K562 (cell line): ENCODE measurements at regions of chr1 and their contacts with region 1.

Region 1: GRCh38 chr1:65309304-65310077 is at the start of gene DNAJC6:
- DNase-seq: peak; percentile 76 to 88 (median 80)
- ATAC-seq: peak; percentile 93
- H3K4me3 ChIP-seq: peak within 1 kb of the TSS; percentile 51
- H3K27ac ChIP-seq: peak within 1 kb of the TSS; percentile 68
- H3K4me1 ChIP-seq: peaks cover 16 to 25% of the 10 kb centered on the region in 2 experiments; a peak in 4 of 5 replicates
- H3K27me3 ChIP-seq: no peaks in the 10 kb centered on the region
- CTCF ChIP-seq: peak in 2 of 3 experiments; percentile 37 to 58; a peak in 4 of 6 replicates
- EP300 ChIP-seq: no peak; the same call in 1 of the 2 replicates
- POLR2A ChIP-seq: 0 out of 2 replicates have a peak, but pooled peaks have one; percentile 13
- RAD21 ChIP-seq: peak in 1 of 2 experiments; percentile 37; a peak in 3 of 4 replicates
- polyA plus RNA-seq, gene DNAJC6: 6.7 to 8.2 TPM

Region 2: DNA sequence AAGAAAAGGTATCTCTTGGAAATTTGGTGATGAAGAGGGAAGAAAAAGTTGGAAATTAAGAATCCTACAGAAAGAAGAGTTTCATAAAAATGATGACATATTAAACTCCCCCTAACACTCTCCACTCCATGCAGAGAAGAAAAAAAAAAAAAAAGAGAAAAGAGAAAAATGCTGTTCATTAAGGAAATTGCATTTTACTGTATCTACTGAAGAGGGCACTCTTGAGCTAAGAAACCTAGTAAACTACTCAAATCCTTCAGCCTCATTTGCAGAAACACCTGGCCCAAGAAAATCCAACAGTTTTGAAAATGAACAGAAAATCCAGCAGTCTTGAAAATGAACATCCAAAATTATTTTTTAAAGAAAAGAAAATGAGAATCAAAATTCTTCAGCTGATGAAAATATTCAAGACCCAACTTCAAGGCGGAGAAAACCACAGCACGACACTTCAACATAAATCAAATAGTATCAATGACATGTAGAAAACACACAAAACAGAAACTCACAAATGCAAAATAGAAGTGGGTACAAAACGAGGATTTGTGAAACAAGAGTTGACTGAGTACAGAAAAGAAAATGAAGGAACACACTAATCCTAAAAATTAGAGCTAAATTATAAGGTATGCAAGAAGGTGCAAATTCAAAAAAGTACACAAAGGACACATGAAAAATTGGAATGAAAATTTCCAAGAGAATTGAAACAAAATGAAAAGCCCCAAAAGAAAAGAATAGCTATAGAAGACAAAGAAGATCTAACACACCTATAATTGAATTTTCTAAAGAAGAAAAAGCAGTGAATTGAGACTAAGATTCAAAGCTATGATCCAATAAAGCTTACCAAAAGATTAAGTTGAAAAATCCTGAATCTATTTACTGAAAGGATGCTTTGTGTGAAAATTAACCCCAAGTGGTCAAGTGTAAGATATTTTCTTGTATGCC is 73.4 kb before region 1 on chr1:
- CTCF ChIA-PET with region 1: no interaction called
- POLR2A ChIA-PET with region 1: interaction called, 5 read pairs
- in situ Hi-C with region 1: no loop called
- intact Hi-C with region 1: loop called (anchors 5 kb)
- DNase-seq: peak in 3 of 4 experiments; percentile 24 to 81 (median 43)
- ATAC-seq: peak; percentile 5; the same call in 2 of the 3 replicates
- H3K4me3 ChIP-seq: no peak overlapping the region
- H3K27ac ChIP-seq: no peak overlapping the region
- H3K4me1 ChIP-seq: peaks cover 29 to 42% of the 10 kb centered on the region in 2 experiments; a peak in 4 of 5 replicates
- H3K27me3 ChIP-seq: no peaks in the 10 kb centered on the region
- CTCF ChIP-seq: peak; percentile 42 to 81 (median 70); a peak in 5 of 6 replicates
- EP300 ChIP-seq: no peak
- POLR2A ChIP-seq: no peak
- RAD21 ChIP-seq: peak; percentile 74 to 91

Region 3: DNA sequence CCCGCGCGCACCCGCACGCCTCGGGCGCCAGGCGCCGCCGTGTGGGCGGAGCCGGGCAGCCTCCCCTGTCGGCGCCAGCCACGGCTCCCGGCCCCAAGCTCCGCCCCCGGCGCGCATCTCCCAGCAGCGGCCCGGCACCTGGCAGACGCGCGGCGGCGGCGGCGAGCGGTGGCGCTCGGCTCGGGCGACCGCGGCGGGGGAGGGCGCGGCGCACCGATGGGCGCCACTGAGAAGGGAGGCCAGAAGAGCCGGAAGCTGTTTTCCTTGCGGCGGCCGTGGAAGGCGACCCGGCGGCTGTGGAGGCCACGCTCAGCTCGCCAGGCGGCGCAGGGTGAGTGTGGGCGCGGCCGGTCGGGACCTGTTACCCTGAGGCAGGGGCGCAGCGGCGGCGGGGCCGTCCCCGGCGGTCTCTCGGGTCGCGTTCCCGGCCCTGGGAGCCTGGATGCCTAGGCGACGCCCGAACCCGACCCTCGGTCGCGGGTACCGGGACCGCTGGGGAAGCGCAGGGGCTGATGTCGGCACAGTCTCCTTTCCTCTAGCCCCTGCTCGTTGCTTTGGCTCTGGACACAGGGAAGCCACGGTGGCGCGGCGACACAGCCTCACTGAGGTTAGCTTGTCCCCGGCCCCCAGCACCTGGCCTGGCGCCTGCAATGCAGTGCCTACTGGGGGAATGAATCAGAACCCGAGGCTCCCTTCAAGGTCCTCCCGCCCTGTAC is 55.0 kb before region 1 on chr1:
- CTCF ChIA-PET with region 1: interaction called, 4 read pairs
- POLR2A ChIA-PET with region 1: interaction called, 3 read pairs
- in situ Hi-C with region 1: no loop called
- intact Hi-C with region 1: loop called (anchors 2 kb)
- DNase-seq: peak; percentile 93 to 96 (median 94)
- ATAC-seq: peak; percentile 90
- H3K4me3 ChIP-seq: peak overlapping the region; percentile 68
- H3K27ac ChIP-seq: peak overlapping the region; percentile 83
- H3K4me1 ChIP-seq: peaks cover 19 to 23% of the 10 kb centered on the region in 2 experiments
- H3K27me3 ChIP-seq: no peaks in the 10 kb centered on the region
- CTCF ChIP-seq: peak in 2 of 3 experiments; percentile 18 to 29; a peak in 3 of 6 replicates
- EP300 ChIP-seq: no peak; the same call in 1 of the 2 replicates
- POLR2A ChIP-seq: no peak; the same call in 1 of the 2 replicates
- RAD21 ChIP-seq: peak; percentile 37 to 51; a peak in 2 of 4 replicates

Region 4: GRCh38 chr1:65362545-65362944 is 53.1 kb after region 1 on chr1:
- CTCF ChIA-PET with region 1: no interaction called
- POLR2A ChIA-PET with region 1: interaction called, 3 read pairs
- in situ Hi-C with region 1: no loop called
- intact Hi-C with region 1: loop called (anchors 5 kb)
- DNase-seq: no peak
- ATAC-seq: no peak
- H3K4me3 ChIP-seq: no peak overlapping the region
- H3K27ac ChIP-seq: no peak overlapping the region
- H3K4me1 ChIP-seq: no peaks in the 10 kb centered on the region
- H3K27me3 ChIP-seq: no peaks in the 10 kb centered on the region
- CTCF ChIP-seq: no peak
- EP300 ChIP-seq: no peak
- POLR2A ChIP-seq: no peak
- RAD21 ChIP-seq: no peak

Region 5: GRCh38 chr1:65377496-65378246 is 68.2 kb after region 1 on chr1:
- CTCF ChIA-PET with region 1: no interaction called
- POLR2A ChIA-PET with region 1: no interaction called
- in situ Hi-C with region 1: no loop called
- intact Hi-C with region 1: loop called (anchors 5 kb)
- DNase-seq: no peak
- ATAC-seq: peak; percentile 65
- H3K4me3 ChIP-seq: no peak overlapping the region
- H3K27ac ChIP-seq: no peak overlapping the region; the same call in 2 of the 3 replicates
- H3K4me1 ChIP-seq: peaks cover 0 to 12% of the 10 kb centered on the region in 2 experiments; a peak in 2 of 5 replicates
- H3K27me3 ChIP-seq: no peaks in the 10 kb centered on the region
- CTCF ChIP-seq: no peak
- EP300 ChIP-seq: no peak
- POLR2A ChIP-seq: no peak
- RAD21 ChIP-seq: no peak